ENCODE measurements at regions of chr20 and their contacts with region 1.

Region 1: DNA sequence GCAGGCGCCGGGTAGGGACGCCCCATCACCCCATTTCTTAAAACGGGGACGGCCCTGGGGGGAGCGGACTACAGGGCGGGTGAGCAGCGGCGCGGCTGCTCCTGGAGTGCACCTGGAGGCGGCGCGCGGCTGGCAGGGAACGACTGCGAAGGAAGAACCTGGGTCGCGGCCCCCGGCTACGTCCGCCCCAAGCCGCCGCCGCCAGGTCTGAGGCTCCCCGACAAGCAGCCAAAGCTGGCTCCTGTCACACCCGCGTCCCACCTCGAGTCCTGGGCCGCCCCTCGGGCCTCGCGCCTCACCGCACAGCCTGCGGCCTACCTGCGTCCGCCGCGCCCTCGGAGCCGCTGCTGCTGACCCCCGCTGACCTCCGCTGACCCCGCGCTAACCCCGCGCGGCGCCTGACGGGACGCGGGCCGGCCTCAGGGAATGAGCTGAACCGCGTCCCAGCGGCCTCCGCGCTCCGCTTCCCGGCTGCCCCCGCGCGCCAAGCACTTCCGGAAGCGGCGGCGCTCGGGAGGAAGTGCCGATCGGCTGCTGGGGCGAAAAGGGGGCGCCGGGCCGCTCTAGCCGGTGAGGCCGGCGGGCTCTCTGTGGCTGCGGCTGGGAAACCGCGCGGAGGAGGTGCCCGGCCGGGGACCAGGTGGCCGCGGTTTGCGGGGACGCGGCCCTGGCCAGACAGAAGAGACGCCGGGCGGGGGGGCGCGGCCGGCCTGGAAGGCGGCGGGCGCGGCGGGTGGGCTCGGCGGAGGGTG is at the starts of genes ARFRP1 and ZGPAT:
- DNase-seq: peak; percentile 96
- H3K4me3 ChIP-seq: peak within 1 kb of the TSS; percentile 73 to 99 (median 90)
- H3K27ac ChIP-seq: peak within 1 kb of the TSS; percentile 81 to 96 (median 88)
- H3K4me1 ChIP-seq: peaks cover 28 to 45% (median 38%) of the 10 kb centered on the region in 4 donors
- H3K27me3 ChIP-seq: no peaks in the 10 kb centered on the region
- CTCF ChIP-seq: peak in 1 of 3 experiments; percentile 16
- EP300 ChIP-seq: no peak
- POLR2A ChIP-seq: peak; percentile 24
- total RNA-seq, gene ARFRP1: 34.1 to 46.5 (median 44.6) TPM
- total RNA-seq, gene ZGPAT: 22.5 to 38.9 (median 28.6) TPM

Region 2: DNA sequence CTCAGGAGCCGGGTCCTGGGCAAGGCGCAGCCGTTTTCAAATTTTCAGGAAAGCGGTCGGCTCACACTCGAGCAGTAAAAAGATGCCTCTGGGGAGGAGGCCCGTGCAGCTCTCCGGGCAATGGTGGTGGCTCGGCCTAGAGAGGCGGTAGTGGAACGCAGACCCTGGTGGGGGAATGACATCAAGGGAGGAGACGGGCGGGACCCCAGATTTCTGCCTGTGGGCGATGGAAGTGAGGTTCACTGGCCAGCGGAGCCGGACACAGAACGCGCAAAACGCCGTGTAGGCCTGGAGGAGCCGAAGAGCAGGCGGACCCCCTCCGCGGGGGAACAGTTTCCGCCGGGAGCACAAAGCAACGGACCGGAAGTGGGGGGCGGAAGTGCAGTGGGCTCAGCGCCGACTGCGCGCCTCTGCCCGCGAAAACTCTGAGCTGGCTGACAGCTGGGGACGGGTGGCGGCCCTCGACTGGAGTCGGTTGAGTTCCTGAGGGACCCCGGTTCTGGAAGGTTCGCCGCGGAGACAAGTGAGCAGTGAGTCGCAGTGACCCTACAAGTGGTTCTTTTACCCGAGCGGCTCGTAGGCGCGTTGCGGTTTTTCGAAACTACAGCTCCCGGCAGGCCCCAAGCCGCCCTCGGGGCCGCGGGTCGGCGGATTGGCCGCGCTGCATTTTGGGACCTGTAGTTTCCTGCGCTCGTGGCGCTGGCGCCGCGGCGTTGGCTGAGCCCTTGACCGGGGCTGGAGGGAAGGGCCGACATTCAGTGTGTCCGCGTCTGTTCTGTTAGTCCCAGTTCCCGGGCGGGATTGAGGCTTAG is 49.6 kb before region 1 on chr20 and contains the start of gene RTEL1:
- intact Hi-C with region 1: loop called (anchors 5 kb)
- DNase-seq: peak; percentile 97
- H3K4me3 ChIP-seq: peak within 1 kb of the TSS; percentile 65 to 75 (median 70)
- H3K27ac ChIP-seq: peak within 1 kb of the TSS; percentile 86 to 91 (median 87)
- H3K4me1 ChIP-seq: peaks cover 27 to 43% (median 40%) of the 10 kb centered on the region in 4 donors
- H3K27me3 ChIP-seq: no peaks in the 10 kb centered on the region
- CTCF ChIP-seq: peak in 1 of 3 experiments; percentile 4
- EP300 ChIP-seq: no peak
- POLR2A ChIP-seq: peak; percentile 54
- total RNA-seq, gene RTEL1: 8.4 to 13.4 (median 9.6) TPM

Region 3: DNA sequence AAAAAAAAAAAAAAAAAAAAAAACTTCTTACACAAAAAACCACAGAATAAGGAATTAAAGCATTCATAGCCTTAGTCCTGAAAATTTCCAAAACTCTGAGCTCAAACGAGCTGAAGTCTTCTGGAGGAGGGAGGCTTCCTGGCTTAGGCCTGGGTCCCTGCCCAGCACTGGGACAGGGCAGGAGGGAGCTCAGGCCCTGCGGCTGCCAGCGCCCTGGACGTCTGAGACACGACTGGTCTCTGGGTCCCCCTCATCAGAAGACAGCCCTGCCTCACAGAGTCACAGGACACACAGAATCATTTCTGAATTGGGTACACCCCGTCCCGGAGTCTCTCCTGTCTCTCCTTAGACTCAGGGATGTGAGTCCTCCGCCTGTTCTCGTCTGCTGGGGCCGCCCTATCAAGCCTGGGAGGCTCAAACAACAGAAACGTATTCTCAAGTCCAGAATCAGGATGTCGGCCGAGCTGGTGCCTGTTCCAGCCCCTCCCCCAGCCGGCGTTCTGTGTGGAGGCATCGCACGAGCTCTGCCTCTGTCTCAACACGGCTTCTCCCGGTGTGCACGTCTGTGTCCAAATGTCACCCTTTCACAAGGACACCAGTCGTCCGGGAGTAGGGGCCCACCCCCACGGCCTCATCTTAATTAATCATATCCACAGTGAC is 83.9 kb after region 1 on chr20:
- intact Hi-C with region 1: no loop called
- DNase-seq: no peak
- H3K4me3 ChIP-seq: no peak overlapping the region
- H3K27ac ChIP-seq: peak overlapping the region in 2 of 4 donors; percentile 38 to 68
- H3K4me1 ChIP-seq: peaks cover 0 to 40% (median 10%) of the 10 kb centered on the region in 4 donors
- H3K27me3 ChIP-seq: no peaks in the 10 kb centered on the region
- CTCF ChIP-seq: no peak
- EP300 ChIP-seq: no peak
- POLR2A ChIP-seq: no peak

Measured in esophagus muscularis mucosa (tissue), 4 donors.